PC-3 (cell line): ENCODE measurements at regions of chr12 and their contacts with region 1.

Region 1: DNA sequence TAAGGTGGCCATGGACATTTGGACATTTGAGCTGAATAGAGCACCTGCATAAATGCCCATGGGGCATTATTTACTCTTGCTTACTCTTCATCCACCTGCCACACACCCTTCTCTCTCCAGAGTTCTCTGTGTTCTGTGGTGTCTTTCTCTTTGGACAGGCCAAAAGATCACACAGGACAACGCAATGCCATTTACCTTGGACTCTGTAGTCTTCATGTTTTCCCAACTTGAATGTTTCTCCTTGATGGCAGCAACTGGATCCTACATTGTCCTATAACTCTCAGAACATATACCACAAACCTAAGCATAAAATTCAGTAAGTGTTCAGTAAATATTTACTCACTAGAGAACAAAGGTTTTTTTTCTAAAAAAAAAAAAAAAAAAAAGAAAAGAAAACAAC is 41.7 kb upstream of the PTHLH start:
- DNase-seq: no peak
- ATAC-seq: peak; percentile 48
- H3K4me3 ChIP-seq: no peak overlapping the region
- H3K27ac ChIP-seq: no peak overlapping the region
- H3K4me1 ChIP-seq: peaks cover 4% of the 10 kb centered on the region
- H3K27me3 ChIP-seq: no peaks in the 10 kb centered on the region
- CTCF ChIP-seq: no peak

Region 2: DNA sequence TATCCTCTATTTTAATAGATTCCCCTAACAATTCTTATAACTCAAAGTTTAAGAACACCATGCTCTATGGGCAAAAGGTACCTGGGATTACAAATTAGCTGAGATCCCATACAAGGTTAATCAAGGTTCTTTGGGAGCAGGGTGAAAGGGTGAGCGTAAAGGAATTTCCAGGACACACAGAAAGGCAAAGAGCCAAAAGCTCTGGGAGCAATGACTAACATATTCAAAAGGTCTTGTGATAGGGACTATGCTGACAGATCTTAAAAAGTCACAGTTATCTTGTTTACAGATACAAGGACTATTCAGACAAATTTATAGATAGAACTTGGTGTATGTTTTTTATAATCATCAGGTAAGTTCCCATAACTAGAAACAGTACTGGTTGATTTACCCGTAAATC is 509.7 kb before region 1 on chr12:
- CTCF ChIA-PET with region 1: no interaction called
- POLR2A ChIA-PET with region 1: no interaction called
- intact Hi-C with region 1: no loop called
- DNase-seq: no peak
- ATAC-seq: no peak
- H3K4me3 ChIP-seq: no peak overlapping the region
- H3K27ac ChIP-seq: no peak overlapping the region
- H3K4me1 ChIP-seq: peaks cover 3% of the 10 kb centered on the region
- H3K27me3 ChIP-seq: no peaks in the 10 kb centered on the region
- CTCF ChIP-seq: no peak

Region 3: DNA sequence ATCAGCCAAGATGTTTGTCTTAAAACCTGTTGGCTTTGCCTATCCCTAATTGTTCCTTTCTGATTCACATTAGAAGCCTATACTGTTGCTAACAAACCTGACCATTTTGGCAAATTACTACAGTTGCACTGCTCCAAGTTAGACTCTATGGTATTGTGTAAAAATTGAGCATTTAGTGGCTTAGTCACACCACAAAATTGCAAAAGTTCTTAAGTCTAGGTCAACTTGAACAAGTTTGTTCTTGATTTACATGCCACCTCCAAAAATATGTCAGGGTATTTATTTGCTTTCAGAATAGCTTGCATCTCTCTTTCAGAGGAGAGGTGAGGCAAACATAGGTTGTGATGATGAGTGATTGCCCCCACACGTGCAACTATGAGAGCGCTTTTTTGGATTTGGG is 14.7 kb before region 1 on chr12:
- CTCF ChIA-PET with region 1: no interaction called
- POLR2A ChIA-PET with region 1: no interaction called
- intact Hi-C with region 1: loop called (anchors 2 kb)
- DNase-seq: peak; percentile 70
- ATAC-seq: peak; percentile 49
- H3K4me3 ChIP-seq: no peak overlapping the region
- H3K27ac ChIP-seq: no peak overlapping the region
- H3K4me1 ChIP-seq: peaks cover 4% of the 10 kb centered on the region; the same call in 1 of the 2 replicates
- H3K27me3 ChIP-seq: no peaks in the 10 kb centered on the region
- CTCF ChIP-seq: no peak